CD8-positive, alpha-beta T cell (primary cell): ENCODE measurements at regions of chr3 and their contacts with region 1.

Region 1: GRCh38 chr3:141608438-141608837 is 121.6 kb downstream of the RASA2 start:
- DNase-seq: no peak
- ATAC-seq: no peak
- H3K4me3 ChIP-seq: no peak overlapping the region
- H3K4me3 Mint-ChIP-seq: no peak overlapping the region
- H3K27ac ChIP-seq: no peak overlapping the region
- H3K27ac Mint-ChIP-seq: no peak overlapping the region
- H3K4me1 ChIP-seq: no peaks in the 10 kb centered on the region
- H3K4me1 Mint-ChIP-seq: peaks cover 5% of the 10 kb centered on the region
- H3K27me3 ChIP-seq: no peaks in the 10 kb centered on the region
- H3K27me3 Mint-ChIP-seq: no peaks in the 10 kb centered on the region
- CTCF ChIP-seq: no peak

Region 2: DNA sequence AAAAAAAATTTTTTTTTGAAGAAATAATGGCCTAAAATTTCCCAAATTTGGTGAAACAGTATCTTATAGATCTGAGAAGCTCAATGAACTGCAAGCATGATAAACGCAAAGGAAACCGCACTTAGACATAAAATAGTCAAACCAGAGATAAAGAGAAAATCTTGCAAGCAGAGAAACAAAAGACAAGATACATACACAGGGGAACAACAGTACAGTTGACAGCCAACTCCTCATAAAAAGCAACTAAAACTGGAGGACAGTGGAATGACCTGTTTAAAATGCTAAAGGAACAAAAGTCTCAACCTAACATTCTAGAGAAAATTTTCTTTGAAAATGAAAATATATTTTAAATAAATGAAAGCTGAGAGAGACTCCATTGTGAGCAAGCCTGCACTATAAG is 14.1 kb before region 1 on chr3:
- CTCF ChIA-PET with region 1: no interaction called
- POLR2A ChIA-PET with region 1: no interaction called
- intact Hi-C with region 1: loop called in 1 of 2 experiments (anchors 2 kb)
- DNase-seq: no peak
- ATAC-seq: no peak
- H3K4me3 ChIP-seq: no peak overlapping the region
- H3K4me3 Mint-ChIP-seq: no peak overlapping the region
- H3K27ac ChIP-seq: no peak overlapping the region
- H3K27ac Mint-ChIP-seq: no peak overlapping the region
- H3K4me1 ChIP-seq: no peaks in the 10 kb centered on the region
- H3K4me1 Mint-ChIP-seq: no peaks in the 10 kb centered on the region
- H3K27me3 ChIP-seq: no peaks in the 10 kb centered on the region
- H3K27me3 Mint-ChIP-seq: no peaks in the 10 kb centered on the region
- CTCF ChIP-seq: no peak

Region 3: GRCh38 chr3:142129516-142130171 is 521.2 kb after region 1 on chr3:
- CTCF ChIA-PET with region 1: no interaction called
- POLR2A ChIA-PET with region 1: no interaction called
- intact Hi-C with region 1: no loop called
- DNase-seq: no peak
- ATAC-seq: no peak
- H3K4me3 ChIP-seq: no peak overlapping the region
- H3K4me3 Mint-ChIP-seq: no peak overlapping the region
- H3K27ac ChIP-seq: peak overlapping the region in 1 of 2 experiments; percentile 63
- H3K27ac Mint-ChIP-seq: no peak overlapping the region
- H3K4me1 ChIP-seq: no peaks in the 10 kb centered on the region
- H3K4me1 Mint-ChIP-seq: peaks cover 3% of the 10 kb centered on the region
- H3K27me3 ChIP-seq: no peaks in the 10 kb centered on the region
- H3K27me3 Mint-ChIP-seq: no peaks in the 10 kb centered on the region
- CTCF ChIP-seq: no peak